T-cell (primary cell): ENCODE measurements at regions of chr1 and their contacts with region 1.

Region 1: GRCh38 chr1:11037740-11038182 is 9.3 kb downstream of the MASP2 start:
- DNase-seq: peak; percentile 74 to 95 (median 86)
- ATAC-seq: peak; percentile 96 to 99 (median 99)
- H3K4me3 ChIP-seq: no peak overlapping the region
- H3K4me3 Mint-ChIP-seq: no peak overlapping the region
- H3K27ac ChIP-seq: no peak overlapping the region
- H3K27ac Mint-ChIP-seq: no peak overlapping the region
- H3K4me1 ChIP-seq: peaks cover 3 to 5% of the 10 kb centered on the region in 2 experiments
- H3K4me1 Mint-ChIP-seq: peaks cover 6 to 7% (median 6%) of the 10 kb centered on the region in 3 donors
- H3K27me3 ChIP-seq: peaks cover 0 to 19% of the 10 kb centered on the region in 2 experiments
- H3K27me3 Mint-ChIP-seq: no peaks in the 10 kb centered on the region

Region 2: GRCh38 chr1:10980094-10980577 is 57.6 kb before region 1 on chr1:
- CTCF ChIA-PET with region 1: no interaction called
- POLR2A ChIA-PET with region 1: no interaction called
- DNase-seq: no peak
- ATAC-seq: no peak
- H3K4me3 ChIP-seq: no peak overlapping the region
- H3K4me3 Mint-ChIP-seq: no peak overlapping the region
- H3K27ac ChIP-seq: no peak overlapping the region
- H3K27ac Mint-ChIP-seq: no peak overlapping the region
- H3K4me1 ChIP-seq: no peaks in the 10 kb centered on the region
- H3K4me1 Mint-ChIP-seq: peaks cover 0 to 6% (median 4%) of the 10 kb centered on the region in 3 donors
- H3K27me3 ChIP-seq: peaks cover 0 to 45% of the 10 kb centered on the region in 2 experiments
- H3K27me3 Mint-ChIP-seq: peaks cover 14 to 36% of the 10 kb centered on the region in 2 donors

Region 3: GRCh38 chr1:11019971-11020370 is 17.8 kb before region 1 on chr1:
- CTCF ChIA-PET with region 1: no interaction called
- POLR2A ChIA-PET with region 1: no interaction called
- DNase-seq: no peak
- ATAC-seq: no peak
- H3K4me3 ChIP-seq: no peak overlapping the region
- H3K4me3 Mint-ChIP-seq: no peak overlapping the region
- H3K27ac ChIP-seq: no peak overlapping the region
- H3K27ac Mint-ChIP-seq: no peak overlapping the region
- H3K4me1 ChIP-seq: peaks cover 1 to 17% of the 10 kb centered on the region in 2 experiments
- H3K4me1 Mint-ChIP-seq: peaks cover 48 to 49% (median 49%) of the 10 kb centered on the region in 3 donors
- H3K27me3 ChIP-seq: no peaks in the 10 kb centered on the region
- H3K27me3 Mint-ChIP-seq: no peaks in the 10 kb centered on the region

Region 4: GRCh38 chr1:11059990-11060830 is 22.4 kb after region 1 on chr1 and contains the start of gene SRM:
- CTCF ChIA-PET with region 1: interaction called, 3 to 30 read pairs
- POLR2A ChIA-PET with region 1: interaction called in 1 of 2 experiments, 4 read pairs
- DNase-seq: peak; percentile 76 to 93 (median 87)
- ATAC-seq: peak; percentile 95 to 98 (median 96)
- H3K4me3 ChIP-seq: peak within 1 kb of the TSS; percentile 82 to 88
- H3K4me3 Mint-ChIP-seq: peak within 1 kb of the TSS; percentile 92
- H3K27ac ChIP-seq: peak within 1 kb of the TSS; percentile 71
- H3K27ac Mint-ChIP-seq: peak within 1 kb of the TSS; percentile 93 to 95
- H3K4me1 ChIP-seq: peaks cover 9 to 37% of the 10 kb centered on the region in 2 experiments
- H3K4me1 Mint-ChIP-seq: peaks cover 28 to 41% (median 35%) of the 10 kb centered on the region in 3 donors
- H3K27me3 ChIP-seq: no peaks in the 10 kb centered on the region
- H3K27me3 Mint-ChIP-seq: no peaks in the 10 kb centered on the region
- total RNA-seq, gene SRM: 38.0 to 78.5 (median 72.4) TPM

Region 5: DNA sequence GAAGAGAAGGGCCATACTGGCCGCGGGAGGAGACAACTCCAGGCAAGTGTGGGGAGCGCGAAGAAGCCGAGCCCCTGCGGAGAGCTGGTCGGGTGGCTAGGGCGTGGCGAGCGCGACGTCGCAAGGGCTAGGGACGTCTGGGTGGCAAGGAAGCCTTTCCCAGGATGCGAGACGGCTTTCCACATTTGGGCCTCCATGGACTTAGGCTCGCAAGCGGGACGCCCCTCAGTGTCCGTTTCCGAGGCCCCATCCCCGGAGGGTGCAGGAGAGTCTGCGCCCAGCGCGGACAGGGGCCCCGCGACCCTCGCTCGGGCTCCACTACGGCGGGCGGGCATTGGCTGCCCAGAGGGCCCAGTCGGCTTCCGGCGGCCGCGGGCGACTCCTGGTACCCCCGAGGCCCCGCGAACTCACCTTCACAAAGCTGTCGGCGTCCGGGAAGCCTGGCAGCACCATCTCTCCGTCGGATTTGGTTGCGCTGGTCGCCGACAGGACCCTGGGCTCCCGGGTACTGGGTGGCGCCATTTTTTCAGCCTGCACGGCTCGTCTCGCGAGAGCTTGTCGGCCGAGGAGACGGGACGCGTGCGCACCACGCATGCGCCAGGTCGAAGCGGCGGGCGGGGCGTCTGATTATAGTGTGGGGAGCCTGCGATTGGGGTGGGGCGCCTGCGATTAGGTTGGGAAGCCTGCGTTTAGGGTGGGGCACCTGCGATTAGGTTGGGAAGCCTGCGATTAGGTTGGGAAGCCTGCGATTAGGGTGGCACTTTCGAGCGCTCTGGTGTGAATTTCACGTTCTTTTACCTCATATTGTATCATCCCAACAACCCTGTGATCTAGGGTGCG is 61.8 kb after region 1 on chr1 and contains the start of gene EXOSC10:
- CTCF ChIA-PET with region 1: interaction called, 7 to 17 read pairs
- POLR2A ChIA-PET with region 1: no interaction called
- DNase-seq: peak; percentile 85 to 96 (median 93)
- ATAC-seq: peak; percentile 98 to 99 (median 98)
- H3K4me3 ChIP-seq: peak within 1 kb of the TSS; percentile 81 to 87
- H3K4me3 Mint-ChIP-seq: peak within 1 kb of the TSS; percentile 90 to 96 (median 90)
- H3K27ac ChIP-seq: peak within 1 kb of the TSS; percentile 56
- H3K27ac Mint-ChIP-seq: peak within 1 kb of the TSS; percentile 89 to 96
- H3K4me1 ChIP-seq: peaks cover 8 to 12% of the 10 kb centered on the region in 2 experiments
- H3K4me1 Mint-ChIP-seq: peaks cover 10 to 23% (median 19%) of the 10 kb centered on the region in 3 donors
- H3K27me3 ChIP-seq: no peaks in the 10 kb centered on the region
- H3K27me3 Mint-ChIP-seq: no peaks in the 10 kb centered on the region
- total RNA-seq, gene EXOSC10: 72.5 to 85.2 (median 82.1) TPM

Region 6: GRCh38 chr1:11138952-11139351 is 101.2 kb after region 1 on chr1:
- CTCF ChIA-PET with region 1: no interaction called
- POLR2A ChIA-PET with region 1: no interaction called
- DNase-seq: no peak
- ATAC-seq: no peak
- H3K4me3 ChIP-seq: no peak overlapping the region
- H3K4me3 Mint-ChIP-seq: no peak overlapping the region
- H3K27ac ChIP-seq: no peak overlapping the region
- H3K27ac Mint-ChIP-seq: no peak overlapping the region
- H3K4me1 ChIP-seq: no peaks in the 10 kb centered on the region
- H3K4me1 Mint-ChIP-seq: no peaks in the 10 kb centered on the region
- H3K27me3 ChIP-seq: no peaks in the 10 kb centered on the region
- H3K27me3 Mint-ChIP-seq: no peaks in the 10 kb centered on the region

Region 7: DNA sequence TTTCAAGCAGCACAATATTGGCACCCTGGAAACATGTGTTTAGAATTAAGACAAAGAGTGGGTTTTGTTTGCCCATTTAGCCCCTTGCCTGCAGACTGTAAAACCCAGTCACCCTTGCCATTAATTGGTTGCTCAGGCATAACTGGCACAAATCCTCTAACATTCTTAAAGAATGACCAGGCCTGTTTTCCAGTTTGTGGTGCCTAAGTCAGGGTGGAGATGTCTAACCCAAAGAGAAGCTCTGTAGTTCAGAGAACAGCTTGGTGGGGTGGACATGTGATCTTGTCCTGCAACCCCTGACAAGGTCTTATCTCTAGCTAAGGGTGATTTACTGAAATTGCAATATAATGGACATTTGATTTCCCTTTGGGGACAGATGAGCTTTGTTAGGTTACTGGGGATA is 142.6 kb after region 1 on chr1:
- CTCF ChIA-PET with region 1: interaction called in 1 of 2 experiments, 11 read pairs
- POLR2A ChIA-PET with region 1: no interaction called
- DNase-seq: no peak
- ATAC-seq: no peak
- H3K4me3 ChIP-seq: no peak overlapping the region
- H3K4me3 Mint-ChIP-seq: no peak overlapping the region
- H3K27ac ChIP-seq: no peak overlapping the region
- H3K27ac Mint-ChIP-seq: no peak overlapping the region
- H3K4me1 ChIP-seq: no peaks in the 10 kb centered on the region
- H3K4me1 Mint-ChIP-seq: no peaks in the 10 kb centered on the region
- H3K27me3 ChIP-seq: no peaks in the 10 kb centered on the region
- H3K27me3 Mint-ChIP-seq: no peaks in the 10 kb centered on the region

Region 8: DNA sequence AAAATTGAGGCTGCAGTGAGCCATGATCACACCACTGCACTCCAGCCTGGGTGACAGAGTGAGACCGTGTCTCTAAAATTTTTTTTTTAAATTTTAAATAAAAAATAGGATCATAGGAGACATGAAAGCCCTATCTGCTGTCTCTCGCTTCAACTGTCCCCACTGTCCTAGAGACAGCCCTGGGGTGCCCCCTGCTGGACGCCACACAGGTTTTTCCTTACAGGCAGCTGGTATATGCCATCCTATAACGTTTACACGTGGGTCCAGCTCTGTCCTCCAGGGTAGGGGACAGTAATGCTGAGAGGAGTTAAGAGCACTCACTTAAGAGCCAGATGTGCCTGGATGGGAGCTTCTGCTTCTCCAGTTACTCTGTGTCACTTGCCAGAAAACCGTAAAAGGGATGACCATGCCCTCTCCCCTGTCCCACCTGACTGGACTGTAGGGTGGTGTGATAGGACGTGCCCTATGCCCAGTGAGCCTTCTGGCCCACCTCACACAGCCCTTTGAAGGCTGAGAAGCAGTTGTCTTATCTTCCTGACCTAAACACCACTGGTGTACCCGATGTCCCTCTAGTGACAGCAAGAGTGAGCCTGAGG is 608.0 kb after region 1 on chr1:
- CTCF ChIA-PET with region 1: interaction called, 4 to 33 read pairs
- POLR2A ChIA-PET with region 1: no interaction called
- DNase-seq: peak; percentile 54 to 85 (median 74)
- ATAC-seq: peak; percentile 43 to 59 (median 52)
- H3K4me3 ChIP-seq: no peak overlapping the region
- H3K4me3 Mint-ChIP-seq: no peak overlapping the region
- H3K27ac ChIP-seq: no peak overlapping the region
- H3K27ac Mint-ChIP-seq: no peak overlapping the region
- H3K4me1 ChIP-seq: peaks cover 2 to 22% of the 10 kb centered on the region in 2 experiments
- H3K4me1 Mint-ChIP-seq: peaks cover 11 to 20% (median 15%) of the 10 kb centered on the region in 3 donors
- H3K27me3 ChIP-seq: peaks cover 0 to 22% of the 10 kb centered on the region in 2 experiments
- H3K27me3 Mint-ChIP-seq: no peaks in the 10 kb centered on the region

Region 9: GRCh38 chr1:11813021-11813420 is 775.3 kb after region 1 on chr1:
- CTCF ChIA-PET with region 1: no interaction called
- POLR2A ChIA-PET with region 1: no interaction called
- DNase-seq: no peak
- ATAC-seq: no peak
- H3K4me3 ChIP-seq: no peak overlapping the region
- H3K4me3 Mint-ChIP-seq: no peak overlapping the region
- H3K27ac ChIP-seq: no peak overlapping the region
- H3K27ac Mint-ChIP-seq: no peak overlapping the region
- H3K4me1 ChIP-seq: no peaks in the 10 kb centered on the region
- H3K4me1 Mint-ChIP-seq: peaks cover 13 to 15% (median 15%) of the 10 kb centered on the region in 3 donors
- H3K27me3 ChIP-seq: no peaks in the 10 kb centered on the region
- H3K27me3 Mint-ChIP-seq: no peaks in the 10 kb centered on the region